Transverse colon (tissue), 4 donors: ENCODE measurements at regions of chr4 and their contacts with region 1.

Region 1: GRCh38 chr4:150063128-150063527 is 15.1 kb upstream of the DCLK2 start:
- DNase-seq: no peak
- H3K4me3 ChIP-seq: no peak overlapping the region
- H3K27ac ChIP-seq: no peak overlapping the region
- H3K4me1 ChIP-seq: no peaks in the 10 kb centered on the region
- H3K27me3 ChIP-seq: no peaks in the 10 kb centered on the region
- CTCF ChIP-seq: no peak
- EP300 ChIP-seq: no peak
- POLR2A ChIP-seq: no peak

Region 2: DNA sequence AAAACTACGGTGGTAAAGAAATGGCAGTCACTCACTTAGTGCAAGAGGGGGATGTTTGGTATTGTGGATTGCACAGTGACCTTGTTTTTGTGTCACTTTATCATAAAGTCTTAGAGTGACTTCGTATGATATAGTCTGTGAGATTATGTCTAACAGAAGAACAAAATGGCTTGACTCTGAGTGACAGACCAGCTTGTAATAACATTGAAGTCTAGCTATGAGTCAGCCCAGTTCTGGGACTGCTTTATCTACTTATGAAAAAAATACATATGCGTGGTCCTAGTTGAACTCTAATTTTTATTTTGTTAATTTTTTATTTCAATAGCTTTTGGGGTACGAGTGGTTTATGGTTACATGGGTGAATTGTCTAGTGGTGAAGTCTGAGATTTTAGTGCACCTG is 35.1 kb after region 1 on chr4:
- in situ Hi-C with region 1: no loop called
- intact Hi-C with region 1: loop called (anchors 1 kb)
- DNase-seq: no peak
- H3K4me3 ChIP-seq: no peak overlapping the region
- H3K27ac ChIP-seq: no peak overlapping the region
- H3K4me1 ChIP-seq: no peaks in the 10 kb centered on the region
- H3K27me3 ChIP-seq: no peaks in the 10 kb centered on the region
- CTCF ChIP-seq: no peak
- EP300 ChIP-seq: no peak
- POLR2A ChIP-seq: no peak

Region 3: GRCh38 chr4:150886599-150886998 is 823.5 kb after region 1 on chr4:
- in situ Hi-C with region 1: no loop called
- intact Hi-C with region 1: no loop called
- DNase-seq: no peak
- H3K4me3 ChIP-seq: no peak overlapping the region
- H3K27ac ChIP-seq: no peak overlapping the region
- H3K4me1 ChIP-seq: peaks cover 0 to 7% (median 0%) of the 10 kb centered on the region in 4 donors
- H3K27me3 ChIP-seq: no peaks in the 10 kb centered on the region
- CTCF ChIP-seq: no peak
- EP300 ChIP-seq: no peak
- POLR2A ChIP-seq: no peak